Left cardiac atrium (tissue), 4 donors: ENCODE measurements at regions of chr10 and their contacts with region 1.

Region 1: DNA sequence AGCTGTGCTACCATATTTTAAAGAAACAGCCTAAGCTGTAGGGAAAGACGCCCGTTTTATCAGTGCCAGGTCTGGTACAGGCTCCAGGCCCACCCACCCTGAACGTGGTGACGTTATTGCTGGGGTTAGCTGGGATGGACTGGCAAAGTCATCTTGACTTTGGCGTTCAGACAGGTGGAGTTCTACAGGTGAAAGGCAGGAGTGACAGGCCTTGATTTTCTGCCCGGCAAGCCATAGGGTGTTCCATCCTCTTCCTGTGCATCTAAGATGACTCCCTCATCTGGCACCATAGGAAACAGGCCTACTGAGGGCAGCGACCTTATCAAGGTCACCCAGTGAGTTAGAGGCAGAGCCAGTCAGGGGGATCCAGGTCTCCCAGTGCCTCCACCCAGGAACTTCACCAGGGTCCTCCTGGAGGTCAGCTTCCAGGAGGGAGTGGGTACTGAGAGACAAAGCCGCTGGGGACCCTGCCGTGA is 41.6 kb downstream of the HK1 start:
- DNase-seq: no peak
- ATAC-seq: no peak

Region 2: GRCh38 chr10:69360485-69361324 is 40.8 kb after region 1 on chr10:
- intact Hi-C with region 1: loop called (anchors 5 kb)
- DNase-seq: peak; percentile 76
- ATAC-seq: peak; percentile 47 to 81

Region 3: DNA sequence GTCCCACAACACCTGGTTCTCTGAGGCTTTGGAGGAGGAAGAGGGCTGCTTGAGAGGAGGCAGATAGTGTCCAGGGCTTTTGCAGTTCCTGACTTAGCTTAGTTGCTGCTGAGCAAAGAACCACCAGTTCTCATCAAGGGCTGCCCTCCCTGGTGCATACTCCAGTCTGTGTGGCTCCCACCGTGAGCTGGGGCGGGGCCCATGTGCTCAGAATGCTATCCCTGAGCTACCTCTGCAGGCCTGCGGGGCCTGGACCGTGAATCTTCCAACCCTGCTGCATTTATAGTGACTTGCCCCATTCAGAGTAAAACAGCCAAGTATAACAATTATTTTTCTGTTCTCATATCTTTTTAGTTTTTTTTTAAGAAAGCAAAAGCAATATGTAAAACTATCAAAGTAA is 47.6 kb after region 1 on chr10:
- intact Hi-C with region 1: loop called (anchors 5 kb)
- DNase-seq: no peak
- ATAC-seq: no peak